ENCODE measurements at regions of chr7 and their contacts with region 1.

Region 1: DNA sequence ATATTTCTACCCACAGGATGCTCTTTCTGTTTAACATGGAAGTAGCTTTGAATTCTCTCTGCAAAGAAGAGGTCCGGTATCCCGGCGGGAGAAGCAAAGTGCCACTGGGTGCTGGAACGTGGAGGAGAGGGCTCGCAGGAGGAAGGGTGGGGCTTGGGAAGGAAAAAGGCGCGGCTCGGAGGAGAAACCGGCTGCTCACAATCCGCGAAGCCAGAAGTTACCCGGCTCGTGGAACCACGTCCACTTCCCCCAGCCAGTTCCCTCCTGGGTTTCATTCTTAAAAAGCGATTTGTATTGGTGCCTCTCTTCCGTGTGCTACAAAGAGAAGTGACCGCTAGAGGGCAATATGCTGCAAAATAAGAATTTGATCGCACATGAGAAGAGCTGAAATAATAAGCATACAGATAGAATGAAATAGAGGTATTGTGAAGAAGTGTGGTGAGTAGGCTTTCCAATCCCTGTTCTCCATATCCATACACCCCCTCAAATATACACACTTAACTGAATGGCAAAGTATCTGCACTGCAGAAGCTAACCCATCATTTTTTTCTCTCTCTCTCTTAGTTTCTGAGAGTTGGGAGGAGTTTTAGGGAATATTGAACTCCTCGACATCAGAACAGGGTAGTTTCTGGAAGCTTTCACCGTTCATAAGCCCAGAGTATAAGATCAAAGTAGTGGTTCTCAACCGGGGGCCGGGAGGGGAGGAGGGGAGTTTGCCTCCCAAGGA is 31.1 kb downstream of the TRIL start:
- DNase-seq: peak; percentile 74
- ATAC-seq: peak; percentile 93

Region 2: DNA sequence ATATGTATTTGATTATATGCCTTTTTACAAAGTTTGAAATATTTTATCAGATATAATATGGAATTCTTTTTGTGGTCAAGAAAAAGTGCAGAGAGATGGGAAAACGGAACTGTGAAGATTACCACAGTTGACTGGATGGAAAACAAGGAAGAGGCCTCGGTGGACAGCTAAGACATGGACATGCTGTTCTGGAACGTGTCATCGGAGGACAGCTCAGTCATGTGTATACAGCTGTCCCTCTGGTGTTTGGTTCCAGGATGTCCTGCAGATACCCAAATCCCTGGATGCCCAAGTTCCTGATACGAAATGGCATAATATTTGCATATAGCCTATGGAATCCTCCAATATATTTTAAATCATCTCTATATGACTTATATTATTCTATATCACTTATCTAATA is 18.3 kb before region 1 on chr7:
- intact Hi-C with region 1: no loop called
- DNase-seq: no peak
- ATAC-seq: peak; percentile 52

Region 3: GRCh38 chr7:29071203-29071874 is 144.3 kb after region 1 on chr7:
- intact Hi-C with region 1: no loop called
- DNase-seq: no peak
- ATAC-seq: no peak

Region 4: GRCh38 chr7:29102548-29103151 is 175.6 kb after region 1 on chr7:
- intact Hi-C with region 1: loop called (anchors 2 kb)
- DNase-seq: peak; percentile 64
- ATAC-seq: peak; percentile 72